ENCODE measurements at regions of chr9 and their contacts with region 1.

Region 1: DNA sequence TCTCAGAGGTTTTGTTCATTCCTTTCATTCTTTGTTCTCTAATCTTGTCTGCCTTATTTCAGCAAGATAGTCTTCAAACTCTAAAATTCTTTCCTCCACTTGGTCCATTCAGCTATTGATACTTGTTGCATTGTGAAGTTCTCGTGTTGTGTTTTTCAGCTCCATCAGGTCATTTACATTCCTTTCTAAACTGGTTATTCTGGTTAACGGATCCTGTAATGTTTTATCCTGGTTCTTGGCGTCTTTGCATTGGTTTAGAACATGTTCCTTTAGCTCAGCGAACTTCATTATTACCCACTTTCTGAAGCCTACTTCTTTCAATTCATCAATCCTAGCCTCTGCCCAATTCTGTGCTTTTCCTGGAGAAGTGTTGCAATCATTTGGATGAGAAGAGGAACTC is 45.1 kb upstream of the TXNDC8 start:
- DNase-seq: no peak
- ATAC-seq: no peak
- H3K4me3 ChIP-seq: no peak overlapping the region
- H3K27ac ChIP-seq: no peak overlapping the region
- H3K4me1 ChIP-seq: no peaks in the 10 kb centered on the region
- H3K27me3 ChIP-seq: no peaks in the 10 kb centered on the region
- CTCF ChIP-seq: no peak
- POLR2A ChIP-seq: no peak
- RAD21 ChIP-seq: no peak

Region 2: DNA sequence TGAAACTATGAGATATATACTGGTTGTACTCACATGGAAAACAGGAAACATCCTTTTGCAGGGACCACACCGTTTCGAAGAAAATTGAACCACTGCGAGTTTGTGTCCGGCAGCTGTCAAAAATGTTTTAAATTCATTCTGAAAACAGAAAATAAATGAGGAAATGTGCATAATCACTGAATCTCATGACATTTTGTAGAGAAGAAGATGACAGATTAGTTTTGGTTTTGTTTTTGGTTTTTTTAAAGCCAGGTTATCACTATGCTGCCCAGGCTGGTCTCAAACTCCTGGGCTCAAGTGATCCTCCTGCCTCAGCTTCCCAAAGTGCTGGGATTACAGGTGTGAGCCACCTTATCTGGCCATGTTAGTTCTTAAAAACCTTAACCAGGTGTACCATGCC is 48.6 kb before region 1 on chr9:
- CTCF ChIA-PET with region 1: no interaction called
- POLR2A ChIA-PET with region 1: no interaction called
- dilution Hi-C with region 1: no loop called
- in situ Hi-C with region 1: loop called (anchors 5 kb)
- intact Hi-C with region 1: no loop called
- DNase-seq: no peak
- ATAC-seq: no peak
- H3K4me3 ChIP-seq: no peak overlapping the region
- H3K27ac ChIP-seq: no peak overlapping the region
- H3K4me1 ChIP-seq: no peaks in the 10 kb centered on the region; the same call in none of the 2 replicates
- H3K27me3 ChIP-seq: no peaks in the 10 kb centered on the region; the same call in 1 of the 2 replicates
- CTCF ChIP-seq: no peak
- POLR2A ChIP-seq: no peak
- RAD21 ChIP-seq: no peak

Measured in IMR-90 (cell line).